CD4-positive, alpha-beta T cell (primary cell): ENCODE measurements at regions of chr10 and their contacts with region 1.

Region 1: GRCh38 chr10:104121520-104122224 is at the start of gene SFR1:
- DNase-seq: peak; percentile 97 to 100 (median 99)
- ATAC-seq: peak; percentile 89
- H3K4me3 ChIP-seq: peak within 1 kb of the TSS; percentile 94
- H3K4me3 Mint-ChIP-seq: peak within 1 kb of the TSS; percentile 97
- H3K27ac ChIP-seq: peak within 1 kb of the TSS; percentile 96 to 100
- H3K27ac Mint-ChIP-seq: peak within 1 kb of the TSS; percentile 100
- H3K4me1 ChIP-seq: peaks cover 10% of the 10 kb centered on the region
- H3K4me1 Mint-ChIP-seq: peaks cover 37% of the 10 kb centered on the region
- H3K27me3 ChIP-seq: no peaks in the 10 kb centered on the region
- H3K27me3 Mint-ChIP-seq: no peaks in the 10 kb centered on the region
- CTCF ChIP-seq: peak; percentile 58
- total RNA-seq, gene SFR1: 7.2 to 7.7 TPM

Region 2: DNA sequence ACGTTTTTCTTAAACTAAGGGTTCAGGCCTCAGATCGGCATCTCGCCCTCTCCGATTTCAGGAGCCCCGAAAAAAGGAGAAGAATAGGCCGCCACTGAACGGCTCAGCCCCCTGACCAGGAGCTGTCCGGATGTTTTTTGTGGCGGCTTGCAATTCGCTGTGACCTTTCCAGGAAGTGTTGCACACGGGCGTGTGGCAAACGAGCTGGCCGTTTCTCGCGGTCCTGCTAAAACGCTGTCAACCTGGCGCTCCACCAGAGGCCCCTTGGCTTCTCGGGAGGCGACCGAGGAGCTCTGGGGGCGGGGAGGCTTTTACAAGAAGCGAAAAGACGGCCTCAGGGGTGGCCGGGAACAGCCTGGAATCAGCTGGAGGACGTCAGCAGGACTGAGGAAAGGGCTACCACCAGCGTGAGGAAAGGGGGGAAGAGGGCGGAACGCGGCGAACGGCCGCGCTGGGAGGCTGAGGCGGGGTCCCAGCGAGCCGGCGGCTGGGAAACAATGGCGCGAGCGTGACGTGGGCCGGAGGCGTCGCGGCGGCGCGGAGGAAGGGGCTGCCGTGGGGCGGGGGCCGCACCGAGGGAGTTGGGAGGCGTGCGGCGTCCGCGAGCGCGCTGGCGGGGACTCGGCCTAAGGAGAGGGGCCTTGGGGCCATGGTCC is 929.1 kb before region 1 on chr10:
- CTCF ChIA-PET with region 1: no interaction called
- POLR2A ChIA-PET with region 1: interaction called, 5 read pairs
- intact Hi-C with region 1: loop called in 1 of 2 experiments (anchors 10 kb)
- DNase-seq: peak; percentile 24 to 78 (median 40)
- ATAC-seq: peak; percentile 68
- H3K4me3 ChIP-seq: peak overlapping the region; percentile 79
- H3K4me3 Mint-ChIP-seq: peak overlapping the region; percentile 99
- H3K27ac ChIP-seq: peak overlapping the region; percentile 75 to 78
- H3K27ac Mint-ChIP-seq: peak overlapping the region; percentile 86
- H3K4me1 ChIP-seq: peaks cover 20% of the 10 kb centered on the region
- H3K4me1 Mint-ChIP-seq: peaks cover 49% of the 10 kb centered on the region
- H3K27me3 ChIP-seq: no peaks in the 10 kb centered on the region
- H3K27me3 Mint-ChIP-seq: no peaks in the 10 kb centered on the region
- CTCF ChIP-seq: no peak

Region 3: DNA sequence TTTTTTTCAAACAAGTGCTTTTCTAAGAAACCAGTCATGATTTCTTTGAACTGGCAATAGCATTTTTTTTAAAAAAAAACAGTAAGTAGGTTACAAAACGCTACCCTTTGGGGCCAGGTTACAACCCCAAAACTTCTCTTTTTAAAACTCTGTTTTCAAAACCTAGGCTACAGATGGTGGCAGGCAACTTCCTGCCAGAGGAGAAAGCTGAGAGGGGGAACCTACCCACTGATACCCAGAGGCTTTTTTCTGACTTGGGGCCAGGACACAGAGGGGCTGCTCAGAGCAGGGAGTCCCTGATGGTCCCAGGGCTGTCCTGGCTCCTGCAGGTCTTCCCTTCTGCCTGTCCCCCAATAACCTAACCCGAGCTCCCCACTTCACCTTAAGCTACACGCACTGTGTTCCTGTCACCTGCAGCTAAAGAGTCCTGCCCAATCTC is 210.6 kb before region 1 on chr10:
- CTCF ChIA-PET with region 1: interaction called, 13 read pairs
- POLR2A ChIA-PET with region 1: interaction called, 31 read pairs
- intact Hi-C with region 1: loop called in 1 of 2 experiments (anchors 1 kb)
- DNase-seq: peak; percentile 23 to 89 (median 44)
- ATAC-seq: peak; percentile 80
- H3K4me3 ChIP-seq: peak overlapping the region; percentile 26
- H3K4me3 Mint-ChIP-seq: peak overlapping the region; percentile 83
- H3K27ac ChIP-seq: peak overlapping the region; percentile 68 to 78
- H3K27ac Mint-ChIP-seq: peak overlapping the region; percentile 99
- H3K4me1 ChIP-seq: peaks cover 77% of the 10 kb centered on the region
- H3K4me1 Mint-ChIP-seq: peaks cover 78% of the 10 kb centered on the region
- H3K27me3 ChIP-seq: no peaks in the 10 kb centered on the region
- H3K27me3 Mint-ChIP-seq: no peaks in the 10 kb centered on the region
- CTCF ChIP-seq: no peak

Region 4: DNA sequence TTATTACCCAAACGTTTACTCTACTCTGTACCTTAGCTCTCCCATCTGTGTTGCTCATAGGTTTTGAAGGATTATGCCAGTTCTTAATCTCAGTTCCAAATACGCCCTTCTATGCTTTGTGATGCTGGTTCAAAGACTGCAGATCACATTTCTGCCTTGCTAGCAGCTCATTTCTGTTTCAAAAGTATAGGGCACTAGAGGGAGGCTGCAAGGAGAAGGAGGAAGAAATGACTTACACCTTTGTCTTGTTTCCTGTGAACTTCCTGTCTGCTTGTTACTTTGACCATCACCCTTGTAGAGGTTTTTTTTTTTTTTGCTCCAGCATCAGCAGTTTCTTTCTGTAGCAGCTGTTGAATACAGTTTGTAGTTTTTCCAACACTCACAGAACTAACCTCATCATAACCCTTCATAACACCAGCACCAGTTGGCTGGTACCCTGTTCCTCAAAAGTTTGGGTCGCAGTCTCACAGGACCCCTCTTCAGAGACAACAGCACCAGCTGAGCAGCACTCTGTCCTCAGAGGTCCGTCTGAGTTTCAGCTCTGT is 138.2 kb before region 1 on chr10:
- CTCF ChIA-PET with region 1: interaction called, 4 read pairs
- POLR2A ChIA-PET with region 1: interaction called, 12 read pairs
- intact Hi-C with region 1: no loop called
- DNase-seq: peak in 4 of 14 experiments; percentile 26 to 63 (median 56)
- ATAC-seq: peak; percentile 82
- H3K4me3 ChIP-seq: peak overlapping the region; percentile 0
- H3K4me3 Mint-ChIP-seq: peak overlapping the region; percentile 12
- H3K27ac ChIP-seq: peak overlapping the region; percentile 34 to 69
- H3K27ac Mint-ChIP-seq: peak overlapping the region; percentile 65
- H3K4me1 ChIP-seq: peaks cover 25% of the 10 kb centered on the region
- H3K4me1 Mint-ChIP-seq: peaks cover 72% of the 10 kb centered on the region
- H3K27me3 ChIP-seq: no peaks in the 10 kb centered on the region
- H3K27me3 Mint-ChIP-seq: no peaks in the 10 kb centered on the region
- CTCF ChIP-seq: no peak

Region 5: GRCh38 chr10:104170610-104171254 is 49.1 kb after region 1 on chr10:
- CTCF ChIA-PET with region 1: interaction called, 3 read pairs
- POLR2A ChIA-PET with region 1: interaction called, 15 read pairs
- intact Hi-C with region 1: no loop called
- DNase-seq: peak in 6 of 14 experiments; percentile 1 to 78 (median 40)
- ATAC-seq: peak; percentile 93
- H3K4me3 ChIP-seq: no peak overlapping the region
- H3K4me3 Mint-ChIP-seq: peak overlapping the region; percentile 5
- H3K27ac ChIP-seq: no peak overlapping the region
- H3K27ac Mint-ChIP-seq: peak overlapping the region; percentile 1
- H3K4me1 ChIP-seq: peaks cover 12% of the 10 kb centered on the region
- H3K4me1 Mint-ChIP-seq: peaks cover 25% of the 10 kb centered on the region
- H3K27me3 ChIP-seq: no peaks in the 10 kb centered on the region
- H3K27me3 Mint-ChIP-seq: peaks cover 5% of the 10 kb centered on the region
- CTCF ChIP-seq: no peak

Region 6: DNA sequence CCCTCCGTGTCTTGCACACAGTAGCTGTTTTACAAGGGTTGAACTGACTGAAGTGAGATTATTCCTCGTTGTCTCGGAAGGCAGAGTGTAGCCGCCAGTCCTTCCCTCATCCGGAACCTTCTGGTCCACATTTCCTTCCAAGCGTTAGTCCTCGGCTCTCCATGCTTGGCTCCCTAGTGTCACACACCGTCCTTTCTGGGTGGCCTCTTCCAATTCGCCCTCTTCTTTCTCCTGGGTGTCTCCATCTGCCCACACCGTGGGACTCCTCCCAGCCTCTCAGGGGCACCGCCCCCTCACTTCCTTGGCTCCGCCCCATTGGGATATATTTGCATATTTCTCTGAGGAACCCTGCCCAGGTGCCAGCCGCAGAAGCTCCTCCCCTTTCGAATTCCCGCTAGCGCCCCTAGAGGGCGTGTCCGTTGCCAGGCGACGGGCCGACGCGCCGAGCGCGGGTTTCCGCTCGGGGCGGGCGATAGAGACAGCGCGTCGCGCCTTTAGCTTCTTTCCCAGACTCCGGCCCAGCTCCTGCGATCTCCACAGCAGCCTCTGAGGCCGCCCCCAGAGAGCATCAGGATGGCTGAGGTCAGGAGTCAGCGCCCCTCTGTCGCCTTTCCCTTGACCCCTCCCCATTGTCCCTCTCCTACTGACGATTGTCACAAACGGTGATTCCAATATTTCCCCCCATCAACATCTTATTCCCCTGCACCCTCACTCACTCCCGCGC is 231.8 kb after region 1 on chr10 and contains the start of gene CFAP58:
- CTCF ChIA-PET with region 1: no interaction called
- POLR2A ChIA-PET with region 1: no interaction called
- intact Hi-C with region 1: loop called in 1 of 2 experiments (anchors 5 kb)
- DNase-seq: peak; percentile 84 to 97 (median 88)
- ATAC-seq: peak; percentile 80
- H3K4me3 ChIP-seq: peak within 1 kb of the TSS; percentile 46
- H3K4me3 Mint-ChIP-seq: peak within 1 kb of the TSS; percentile 26
- H3K27ac ChIP-seq: no peak within 1 kb of the TSS
- H3K27ac Mint-ChIP-seq: no peak within 1 kb of the TSS
- H3K4me1 ChIP-seq: peaks cover 27% of the 10 kb centered on the region
- H3K4me1 Mint-ChIP-seq: peaks cover 12% of the 10 kb centered on the region
- H3K27me3 ChIP-seq: no peaks in the 10 kb centered on the region
- H3K27me3 Mint-ChIP-seq: no peaks in the 10 kb centered on the region
- CTCF ChIP-seq: peak; percentile 84
- total RNA-seq, gene CFAP58: not detected